OCI-LY7 (cell line): ENCODE measurements at regions of chr15 and their contacts with region 1.

Region 1: DNA sequence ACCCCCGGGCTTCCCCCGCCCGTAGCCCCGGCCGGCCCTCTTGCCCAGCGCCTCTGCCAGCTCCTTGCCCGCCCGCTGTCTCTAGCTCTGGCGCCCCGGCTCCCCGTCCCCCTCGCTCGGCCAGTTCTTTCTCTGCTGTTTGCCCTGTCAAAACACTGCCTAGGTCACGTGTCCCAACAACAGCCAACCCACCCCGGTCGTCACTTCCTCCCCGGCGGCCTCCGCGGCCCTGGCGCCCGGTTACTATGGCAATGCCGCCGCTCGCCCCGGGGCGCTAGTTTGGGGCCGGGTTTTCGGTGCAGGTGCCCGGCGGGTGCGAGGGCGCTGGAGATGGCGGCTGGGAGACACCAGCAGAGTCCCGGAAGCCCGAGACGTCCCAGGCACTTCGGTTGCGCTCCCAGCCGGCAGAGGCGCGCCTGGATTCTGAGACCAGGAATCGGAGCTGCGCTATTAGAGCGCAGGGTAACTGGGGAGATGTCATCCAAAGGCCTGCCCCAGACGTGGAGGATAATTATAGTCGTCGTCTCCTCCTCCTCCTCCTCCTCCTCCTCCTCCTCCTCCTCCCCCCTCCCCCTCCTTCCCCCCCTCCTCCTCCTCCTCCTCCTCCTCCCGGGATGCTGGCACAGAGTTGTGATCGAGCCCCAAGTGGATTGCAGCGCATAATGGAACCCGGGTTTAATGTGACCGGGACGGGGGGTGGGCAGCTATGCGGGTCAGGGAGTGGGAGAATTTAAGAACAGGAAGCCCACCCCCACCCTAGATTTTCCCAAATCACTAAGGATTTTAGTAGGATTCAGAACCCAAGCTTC is at the start of gene ATOSA:
- DNase-seq: peak; percentile 93
- H3K4me3 ChIP-seq: peak within 1 kb of the TSS; percentile 80
- H3K27ac ChIP-seq: peak within 1 kb of the TSS; percentile 99
- H3K4me1 ChIP-seq: peaks cover 71% of the 10 kb centered on the region
- CTCF ChIP-seq: no peak; the same call in 1 of the 2 replicates
- total RNA-seq, gene ATOSA: 28.5 and 34.1 TPM in 2 replicates

Region 2: GRCh38 chr15:52179278-52180195 is 499.9 kb before region 1 on chr15:
- CTCF ChIA-PET with region 1: no interaction called
- POLR2A ChIA-PET with region 1: interaction called, 3 read pairs
- intact Hi-C with region 1: loop called (anchors 5 kb)
- DNase-seq: peak; percentile 90
- H3K4me3 ChIP-seq: peak overlapping the region; percentile 85
- H3K27ac ChIP-seq: peak overlapping the region; percentile 81
- H3K4me1 ChIP-seq: peaks cover 65% of the 10 kb centered on the region
- CTCF ChIP-seq: no peak

Region 3: DNA sequence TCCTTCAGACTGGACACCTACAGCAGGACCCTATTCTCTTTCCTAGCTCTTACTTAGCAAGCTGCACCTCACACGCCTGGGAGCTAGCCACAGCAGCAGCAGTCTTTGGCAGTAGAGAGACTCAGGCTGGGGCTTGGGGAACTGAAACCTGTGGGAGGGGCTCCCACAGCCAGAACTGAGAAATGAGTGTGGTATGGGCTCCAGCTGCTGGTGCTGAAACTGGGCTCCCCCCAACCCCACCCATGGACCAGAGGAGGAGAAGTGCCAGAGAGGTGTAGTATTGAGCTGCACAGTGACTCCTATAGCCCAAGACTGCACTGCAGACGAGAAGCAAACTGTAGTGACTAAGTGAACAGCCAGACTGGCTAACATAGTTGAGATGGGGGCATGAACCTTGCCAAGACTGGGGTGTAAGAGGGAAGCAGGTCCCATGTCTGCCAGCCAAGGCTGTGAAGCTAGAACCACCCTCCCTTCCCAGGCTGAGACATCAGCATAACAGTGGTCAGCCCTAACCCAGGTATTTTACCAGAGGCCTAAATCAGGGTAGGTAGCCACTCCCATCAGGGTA is 213.2 kb before region 1 on chr15:
- CTCF ChIA-PET with region 1: no interaction called
- POLR2A ChIA-PET with region 1: interaction called, 9 read pairs
- intact Hi-C with region 1: loop called (anchors 5 kb)
- DNase-seq: peak; percentile 97
- H3K4me3 ChIP-seq: peak overlapping the region; percentile 51
- H3K27ac ChIP-seq: peak overlapping the region; percentile 81
- H3K4me1 ChIP-seq: peaks cover 53% of the 10 kb centered on the region
- CTCF ChIP-seq: peak; percentile 78

Region 4: GRCh38 chr15:52568601-52569256 is 110.7 kb before region 1 on chr15 and contains the start of gene ARPP19:
- CTCF ChIA-PET with region 1: no interaction called
- POLR2A ChIA-PET with region 1: interaction called, 4 read pairs
- intact Hi-C with region 1: loop called (anchors 1 kb)
- DNase-seq: peak; percentile 90
- H3K4me3 ChIP-seq: peak within 1 kb of the TSS; percentile 85
- H3K27ac ChIP-seq: peak within 1 kb of the TSS; percentile 75
- H3K4me1 ChIP-seq: peaks cover 30% of the 10 kb centered on the region
- CTCF ChIP-seq: peak; percentile 58
- total RNA-seq, gene ARPP19: 48.0 and 68.3 TPM in 2 replicates

Region 5: DNA sequence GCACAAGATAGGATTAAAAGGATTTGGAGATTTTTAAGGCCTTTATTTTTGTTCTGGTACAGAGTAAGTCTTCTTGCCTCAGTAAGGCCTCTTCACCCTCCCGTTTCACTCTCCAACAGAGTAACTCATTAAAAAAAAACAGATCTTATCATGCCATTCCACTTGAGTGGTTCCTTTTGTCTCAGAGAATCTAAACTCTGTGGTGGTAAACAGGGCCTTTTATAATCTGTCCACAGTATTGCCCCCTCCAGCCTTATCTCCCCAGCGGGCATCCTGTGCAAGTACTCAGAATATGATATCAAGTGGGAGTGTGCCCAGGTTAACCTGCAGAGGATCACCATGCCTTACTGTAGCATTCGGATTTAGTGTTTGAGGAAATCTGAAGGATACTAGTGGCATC is 20.0 kb after region 1 on chr15:
- CTCF ChIA-PET with region 1: no interaction called
- POLR2A ChIA-PET with region 1: interaction called, 11 read pairs
- intact Hi-C with region 1: no loop called
- DNase-seq: no peak
- H3K4me3 ChIP-seq: no peak overlapping the region
- H3K27ac ChIP-seq: no peak overlapping the region
- H3K4me1 ChIP-seq: peaks cover 29% of the 10 kb centered on the region
- CTCF ChIP-seq: no peak

Region 6: GRCh38 chr15:52730173-52730572 is 50.7 kb after region 1 on chr15:
- CTCF ChIA-PET with region 1: interaction called, 3 read pairs
- POLR2A ChIA-PET with region 1: interaction called, 43 read pairs
- intact Hi-C with region 1: loop called (anchors 1 kb)
- DNase-seq: peak; percentile 95
- H3K4me3 ChIP-seq: no peak overlapping the region
- H3K27ac ChIP-seq: peak overlapping the region; percentile 65
- H3K4me1 ChIP-seq: peaks cover 65% of the 10 kb centered on the region
- CTCF ChIP-seq: peak; percentile 76

Region 7: DNA sequence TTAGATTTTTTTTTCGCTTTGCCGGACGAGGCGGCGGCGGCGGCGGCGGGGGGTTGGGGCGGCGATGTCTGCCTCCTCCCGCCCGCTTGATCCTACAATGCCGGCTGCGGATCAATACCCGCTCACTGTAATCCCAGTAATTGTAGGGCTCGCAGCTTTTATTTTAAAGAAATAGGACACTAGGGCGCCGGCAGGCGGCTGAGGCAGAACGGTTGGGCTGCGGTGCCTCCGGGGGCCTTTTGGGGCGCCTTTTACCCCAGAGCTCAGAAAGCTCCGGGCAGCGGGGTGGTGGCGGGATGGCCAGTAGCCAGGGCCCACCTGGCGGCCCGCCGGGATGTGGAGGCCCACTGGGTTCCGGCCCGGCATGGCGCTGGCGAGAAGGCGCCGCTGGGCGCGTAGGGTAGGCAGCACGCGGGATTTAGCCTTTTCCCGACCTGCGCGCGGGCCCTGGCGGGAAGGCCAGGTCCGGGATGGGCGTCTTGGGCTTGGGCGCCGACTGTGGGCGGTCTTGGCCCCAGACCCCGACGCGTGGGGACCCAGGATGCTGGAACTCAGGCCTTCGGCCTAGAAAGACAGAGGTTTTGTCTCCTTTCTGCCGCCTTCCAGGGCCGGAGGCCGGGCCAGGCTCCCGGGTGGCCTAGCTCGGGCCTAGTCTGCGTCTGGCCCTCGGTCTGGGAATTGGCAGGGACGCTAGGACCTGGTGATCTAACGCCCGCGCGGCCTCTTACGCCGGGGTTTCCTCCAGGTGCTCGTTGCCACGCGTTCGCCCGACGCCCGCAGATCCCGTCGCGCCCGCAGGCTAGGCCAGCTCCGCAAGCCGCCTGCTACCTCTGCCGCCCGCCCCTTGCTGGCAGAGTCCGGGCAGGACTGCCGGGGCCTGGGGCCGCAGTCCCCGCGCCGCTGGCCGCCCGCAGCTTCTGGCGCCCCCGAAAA is 126.2 kb after region 1 on chr15:
- CTCF ChIA-PET with region 1: no interaction called
- POLR2A ChIA-PET with region 1: no interaction called
- intact Hi-C with region 1: no loop called
- DNase-seq: no peak
- H3K4me3 ChIP-seq: no peak overlapping the region
- H3K27ac ChIP-seq: no peak overlapping the region
- H3K4me1 ChIP-seq: peaks cover 5% of the 10 kb centered on the region
- CTCF ChIP-seq: no peak